ENCODE measurements at regions of chr14 and their contacts with region 1.

Region 1: DNA sequence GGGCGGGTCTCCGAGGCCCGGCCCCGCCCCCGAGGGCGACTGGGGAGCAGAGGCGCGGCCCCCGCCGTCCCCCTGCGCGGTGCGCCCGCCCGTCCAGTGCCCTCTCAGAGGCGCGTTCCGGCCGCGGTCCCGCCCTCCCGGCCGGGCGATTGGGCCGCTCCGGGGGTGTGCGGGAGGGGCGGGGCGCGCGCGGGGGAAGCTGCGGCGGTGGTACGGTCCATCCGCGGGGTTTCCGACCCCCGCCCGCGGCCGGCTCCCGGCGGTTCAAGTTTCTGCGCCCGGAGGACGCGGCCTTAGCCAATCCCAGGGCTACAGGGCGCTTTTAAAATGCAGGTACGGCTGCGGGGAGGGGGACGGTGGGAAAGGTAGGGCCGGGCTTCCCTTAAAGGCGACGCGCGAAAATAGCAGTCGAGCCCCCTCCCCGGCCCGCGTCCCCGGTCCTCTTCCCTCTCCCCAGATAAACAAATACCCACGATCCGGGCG is 317 bp upstream of the CCDC85C start:
- DNase-seq: peak; percentile 94 to 99
- H3K4me3 ChIP-seq: peak overlapping the region; percentile 81
- H3K4me3 Mint-ChIP-seq: peak overlapping the region; percentile 71
- H3K27ac Mint-ChIP-seq: no peak overlapping the region
- H3K4me1 ChIP-seq: peaks cover 30% of the 10 kb centered on the region
- H3K4me1 Mint-ChIP-seq: peaks cover 21% of the 10 kb centered on the region
- H3K27me3 ChIP-seq: no peaks in the 10 kb centered on the region
- H3K27me3 Mint-ChIP-seq: no peaks in the 10 kb centered on the region
- CTCF ChIP-seq: no peak

Region 2: DNA sequence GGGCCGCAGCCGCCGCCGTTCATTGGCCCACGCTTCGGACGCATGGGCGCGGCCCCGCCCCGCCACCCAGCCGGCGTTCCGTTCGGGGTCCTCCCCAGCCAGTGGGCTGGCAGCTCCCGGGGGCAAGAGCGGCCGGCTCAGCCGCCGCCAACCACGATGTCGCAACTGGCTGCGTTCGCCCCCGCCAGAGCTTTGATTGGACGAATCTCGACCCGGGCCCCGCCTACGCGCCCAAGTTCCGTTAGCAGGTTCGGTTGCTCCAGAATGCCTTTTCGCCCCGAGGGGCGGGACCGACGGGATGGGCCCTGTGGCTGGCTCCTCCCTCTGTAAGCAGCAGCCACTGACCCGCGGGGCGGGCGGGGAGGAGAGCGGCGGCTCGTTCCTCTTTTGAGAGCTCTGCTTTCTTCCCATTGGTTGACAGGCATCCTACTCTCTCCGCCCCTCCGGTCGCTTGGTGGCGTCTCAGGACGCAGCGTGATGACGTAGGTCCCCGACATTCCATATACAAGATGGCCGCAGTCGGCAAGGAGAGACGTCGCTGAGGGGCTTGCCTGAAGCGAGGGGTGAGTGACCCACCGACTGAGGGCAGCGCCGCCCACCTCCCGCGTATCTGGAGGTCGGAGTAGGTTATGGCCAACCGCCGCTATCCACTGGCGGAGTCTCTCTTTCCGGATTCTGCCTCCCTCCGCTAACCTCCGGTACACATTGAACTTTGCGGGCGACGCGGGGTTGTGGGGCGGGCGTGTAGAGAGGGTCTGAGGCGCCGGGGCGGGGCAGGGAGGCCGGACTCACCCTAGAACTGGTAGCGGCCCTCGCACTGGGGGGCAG is 123.2 kb before region 1 on chr14 and contains the start of gene CCNK:
- CTCF ChIA-PET with region 1: no interaction called
- POLR2A ChIA-PET with region 1: interaction called, 12 read pairs
- intact Hi-C with region 1: no loop called
- DNase-seq: peak; percentile 100
- H3K4me3 ChIP-seq: peak within 1 kb of the TSS; percentile 92
- H3K4me3 Mint-ChIP-seq: peak within 1 kb of the TSS; percentile 95
- H3K27ac Mint-ChIP-seq: peak within 1 kb of the TSS; percentile 100
- H3K4me1 ChIP-seq: peaks cover 13% of the 10 kb centered on the region; the same call in 1 of the 2 replicates
- H3K4me1 Mint-ChIP-seq: peaks cover 32% of the 10 kb centered on the region
- H3K27me3 ChIP-seq: no peaks in the 10 kb centered on the region
- H3K27me3 Mint-ChIP-seq: no peaks in the 10 kb centered on the region
- CTCF ChIP-seq: no peak
- total RNA-seq, gene CCNK: 95.4 and 104 TPM in 2 replicates

Region 3: GRCh38 chr14:99563233-99564129 is 40.8 kb before region 1 on chr14:
- CTCF ChIA-PET with region 1: no interaction called
- POLR2A ChIA-PET with region 1: no interaction called
- intact Hi-C with region 1: loop called (anchors 5 kb)
- DNase-seq: peak; percentile 71 to 76
- H3K4me3 ChIP-seq: no peak overlapping the region
- H3K4me3 Mint-ChIP-seq: no peak overlapping the region
- H3K27ac Mint-ChIP-seq: no peak overlapping the region
- H3K4me1 ChIP-seq: peaks cover 7% of the 10 kb centered on the region; the same call in 1 of the 2 replicates
- H3K4me1 Mint-ChIP-seq: peaks cover 13% of the 10 kb centered on the region
- H3K27me3 ChIP-seq: no peaks in the 10 kb centered on the region
- H3K27me3 Mint-ChIP-seq: no peaks in the 10 kb centered on the region
- CTCF ChIP-seq: peak in 1 of 2 experiments; percentile 31

Region 4: GRCh38 chr14:99621960-99622671 is 17.8 kb after region 1 on chr14:
- CTCF ChIA-PET with region 1: interaction called, 6 read pairs
- POLR2A ChIA-PET with region 1: interaction called, 3 read pairs
- intact Hi-C with region 1: loop called (anchors 2 kb)
- DNase-seq: peak in 1 of 2 experiments; percentile 57
- H3K4me3 ChIP-seq: no peak overlapping the region
- H3K4me3 Mint-ChIP-seq: no peak overlapping the region
- H3K27ac Mint-ChIP-seq: peak overlapping the region; percentile 42
- H3K4me1 ChIP-seq: peaks cover 10% of the 10 kb centered on the region
- H3K4me1 Mint-ChIP-seq: peaks cover 11% of the 10 kb centered on the region
- H3K27me3 ChIP-seq: no peaks in the 10 kb centered on the region
- H3K27me3 Mint-ChIP-seq: no peaks in the 10 kb centered on the region
- CTCF ChIP-seq: no peak

Region 5: DNA sequence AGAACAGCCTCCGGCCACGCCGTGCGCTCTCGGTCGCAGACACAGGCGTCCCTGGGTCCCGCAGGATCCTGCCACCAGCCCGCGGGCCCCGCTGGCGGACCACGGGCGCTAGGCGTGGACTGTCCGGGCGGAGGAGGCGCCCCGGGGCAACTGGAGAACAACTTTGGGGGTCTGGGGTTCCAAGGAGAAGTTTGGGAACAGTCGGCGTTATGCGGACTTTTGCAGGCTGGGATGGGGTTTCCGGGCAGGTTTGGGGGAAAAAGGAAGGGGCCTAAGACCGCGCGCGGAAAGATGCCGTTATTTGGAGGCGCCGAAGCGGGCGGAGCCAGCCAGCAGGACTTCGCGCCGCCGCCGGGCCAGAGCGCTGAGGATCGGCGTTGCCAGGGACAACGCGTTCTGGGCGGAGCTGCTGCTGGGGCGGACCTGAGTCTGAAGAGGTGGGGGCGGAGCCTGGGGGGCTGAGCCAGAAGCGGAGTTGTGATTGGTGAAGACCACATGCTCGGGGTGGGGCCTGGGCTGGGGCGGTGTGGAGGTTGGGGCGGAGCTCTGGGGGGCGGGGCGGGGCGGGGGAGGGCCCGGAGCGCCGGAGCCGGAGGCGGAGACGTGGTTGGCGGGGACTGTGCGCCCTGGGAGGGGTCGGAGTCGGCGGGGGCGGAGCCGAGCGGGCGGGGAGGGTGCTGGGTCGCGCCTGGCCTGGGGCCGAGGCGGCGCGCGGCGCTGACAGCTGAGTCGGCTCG is 79.5 kb after region 1 on chr14 and contains the start of gene CYP46A1:
- CTCF ChIA-PET with region 1: interaction called, 3 read pairs
- POLR2A ChIA-PET with region 1: no interaction called
- intact Hi-C with region 1: loop called (anchors 5 kb)
- DNase-seq: peak; percentile 99
- H3K4me3 ChIP-seq: peak within 1 kb of the TSS; percentile 57
- H3K4me3 Mint-ChIP-seq: peak within 1 kb of the TSS; percentile 76
- H3K27ac Mint-ChIP-seq: no peak within 1 kb of the TSS
- H3K4me1 ChIP-seq: peaks cover 9% of the 10 kb centered on the region; the same call in 1 of the 2 replicates
- H3K4me1 Mint-ChIP-seq: peaks cover 7% of the 10 kb centered on the region
- H3K27me3 ChIP-seq: no peaks in the 10 kb centered on the region
- H3K27me3 Mint-ChIP-seq: peaks cover 24% of the 10 kb centered on the region
- CTCF ChIP-seq: no peak
- total RNA-seq, gene CYP46A1: 0.05 and 0.09 TPM in 2 replicates

Region 6: GRCh38 chr14:100714267-100714666 is 1109.9 kb after region 1 on chr14:
- CTCF ChIA-PET with region 1: no interaction called
- POLR2A ChIA-PET with region 1: no interaction called
- intact Hi-C with region 1: no loop called
- DNase-seq: no peak
- H3K4me3 ChIP-seq: no peak overlapping the region
- H3K4me3 Mint-ChIP-seq: no peak overlapping the region
- H3K27ac Mint-ChIP-seq: no peak overlapping the region
- H3K4me1 ChIP-seq: peaks cover 14% of the 10 kb centered on the region
- H3K4me1 Mint-ChIP-seq: peaks cover 12% of the 10 kb centered on the region
- H3K27me3 ChIP-seq: no peaks in the 10 kb centered on the region
- H3K27me3 Mint-ChIP-seq: peaks cover 5% of the 10 kb centered on the region
- CTCF ChIP-seq: no peak